Activated B cell treated with CpG ODN at 0.5 μM for 24 hours (primary cell): ENCODE measurements at regions of chr17 and their contacts with region 1.

Region 1: DNA sequence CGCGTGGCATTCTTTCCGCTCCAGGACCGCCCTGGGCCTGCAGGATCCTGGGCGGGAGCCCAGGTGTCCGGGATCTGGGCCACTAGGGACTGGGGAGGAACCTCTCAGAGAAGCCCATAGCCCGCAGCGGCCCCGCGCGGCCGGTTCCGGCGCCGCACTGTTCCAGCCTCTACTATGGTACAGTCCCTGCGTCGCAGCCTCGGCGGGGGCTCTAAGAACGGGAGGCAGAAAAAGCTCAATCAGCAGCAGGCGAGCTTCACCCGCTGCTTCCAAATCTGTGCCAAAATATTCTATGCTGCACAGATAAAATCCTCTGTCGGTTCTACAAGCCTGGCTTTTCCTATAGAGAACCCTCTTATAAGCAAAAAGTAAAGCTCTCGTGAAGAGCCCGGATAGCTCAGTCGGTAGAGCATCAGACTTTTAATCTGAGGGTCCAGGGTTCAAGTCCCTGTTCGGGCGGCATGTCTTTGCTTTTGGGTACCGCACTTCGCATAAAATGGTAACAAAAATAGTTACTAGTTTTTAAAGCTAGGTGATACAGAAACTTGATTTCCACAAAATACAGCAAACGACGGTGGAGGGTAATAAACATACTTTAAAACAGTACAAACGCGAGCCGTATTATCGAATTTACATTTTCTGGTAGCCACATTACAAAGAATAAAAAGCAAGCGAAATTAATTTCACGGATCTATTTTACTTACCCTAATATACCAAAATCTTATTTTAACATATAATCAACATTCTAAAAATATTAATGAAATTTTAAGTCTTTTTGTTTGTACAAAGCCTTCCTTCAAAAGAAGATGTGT is 661 bp upstream of the ALOXE3 start:
- DNase-seq: peak; percentile 81
- ATAC-seq: peak; percentile 68
- H3K4me3 Mint-ChIP-seq: peak overlapping the region; percentile 93
- H3K27ac Mint-ChIP-seq: peak overlapping the region; percentile 96
- H3K4me1 Mint-ChIP-seq: peaks cover 58% of the 10 kb centered on the region
- H3K27me3 Mint-ChIP-seq: peaks cover 56% of the 10 kb centered on the region
- CTCF ChIP-seq: peak; percentile 26

Region 2: DNA sequence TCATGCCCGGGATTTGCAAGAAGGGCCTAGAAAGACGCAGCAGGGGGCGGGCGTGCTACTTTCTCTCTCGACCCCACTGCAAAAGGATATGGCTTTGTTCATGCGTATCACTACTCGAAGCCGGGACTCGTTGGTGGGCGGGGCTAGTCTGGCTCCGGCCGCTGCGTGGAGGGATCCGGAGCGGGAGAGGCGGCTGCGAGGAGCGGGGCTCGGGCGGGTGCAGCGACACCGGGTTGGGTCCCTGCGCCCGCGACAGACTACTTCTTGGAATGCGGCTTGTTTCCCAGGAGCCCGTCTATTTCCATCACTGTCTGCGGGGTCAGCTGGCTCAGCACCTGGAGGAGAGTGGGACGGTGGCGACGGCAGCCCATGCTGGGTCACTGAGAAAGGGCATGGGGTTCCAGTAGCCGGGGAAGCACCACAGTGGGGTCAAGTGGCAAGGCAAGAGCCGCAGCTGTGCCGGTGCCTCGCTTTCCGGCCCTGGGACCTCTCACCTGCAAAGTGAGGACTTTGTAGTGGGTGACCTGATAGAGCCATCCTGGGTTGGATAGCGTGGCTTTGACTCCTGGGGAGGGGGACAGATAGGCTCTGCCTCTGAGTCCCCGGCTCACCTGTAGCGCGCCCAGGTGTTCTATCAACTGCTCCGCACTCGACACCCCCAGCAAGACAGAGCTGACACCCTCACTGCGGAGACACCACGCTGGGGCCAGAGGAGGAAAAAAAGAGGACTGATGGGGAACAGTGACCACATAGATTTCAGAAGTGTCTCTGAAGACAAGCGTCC is 195.9 kb before region 1 on chr17:
- CTCF ChIA-PET with region 1: no interaction called
- POLR2A ChIA-PET with region 1: no interaction called
- intact Hi-C with region 1: no loop called
- DNase-seq: peak; percentile 71
- ATAC-seq: peak; percentile 98
- H3K4me3 Mint-ChIP-seq: peak overlapping the region; percentile 82
- H3K27ac Mint-ChIP-seq: peak overlapping the region; percentile 80
- H3K4me1 Mint-ChIP-seq: peaks cover 19% of the 10 kb centered on the region
- H3K27me3 Mint-ChIP-seq: no peaks in the 10 kb centered on the region
- CTCF ChIP-seq: no peak

Region 3: GRCh38 chr17:8073627-8074484 is 45.1 kb before region 1 on chr17:
- CTCF ChIA-PET with region 1: interaction called, 33 read pairs
- POLR2A ChIA-PET with region 1: interaction called, 16 read pairs
- intact Hi-C with region 1: loop called (anchors 1 kb)
- DNase-seq: peak; percentile 83
- ATAC-seq: peak; percentile 99
- H3K4me3 Mint-ChIP-seq: peak overlapping the region; percentile 78
- H3K27ac Mint-ChIP-seq: peak overlapping the region; percentile 78
- H3K4me1 Mint-ChIP-seq: peaks cover 31% of the 10 kb centered on the region
- H3K27me3 Mint-ChIP-seq: peaks cover 45% of the 10 kb centered on the region
- CTCF ChIP-seq: peak; percentile 56

Region 4: DNA sequence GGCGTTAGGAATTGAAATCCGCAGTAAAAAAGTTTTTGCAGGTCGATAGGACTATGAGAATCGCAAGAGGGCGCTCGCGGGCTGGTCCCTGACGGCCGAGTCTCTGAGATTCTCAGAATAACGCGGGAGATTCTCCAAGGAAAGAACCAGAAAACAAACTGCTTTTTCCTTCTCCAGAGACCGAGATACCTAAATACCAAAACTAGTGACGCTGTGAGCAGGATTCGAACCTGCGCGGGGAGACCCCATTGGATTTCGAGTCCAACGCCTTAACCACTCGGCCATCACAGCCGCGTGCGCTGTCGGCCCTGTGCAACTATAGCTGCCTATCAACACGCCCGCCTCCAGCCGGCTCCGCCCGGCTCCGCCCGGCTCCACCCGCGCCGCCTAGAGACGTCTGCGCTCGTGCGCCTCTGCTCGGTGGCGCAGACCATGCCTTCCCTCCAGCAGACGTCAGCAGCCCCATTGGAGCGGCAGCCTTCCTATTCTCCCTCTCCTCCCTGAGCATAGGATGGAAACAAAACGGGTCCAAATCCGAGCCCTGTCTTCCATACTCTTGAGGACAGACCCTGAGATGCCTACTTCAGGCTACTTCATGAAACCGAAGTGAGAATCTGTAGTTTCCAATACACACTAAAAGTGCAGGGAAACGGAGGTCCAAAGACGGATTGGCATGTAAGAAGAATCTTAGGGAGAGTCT is 19.8 kb after region 1 on chr17:
- CTCF ChIA-PET with region 1: interaction called, 13 read pairs
- POLR2A ChIA-PET with region 1: interaction called, 46 read pairs
- intact Hi-C with region 1: loop called (anchors 1 kb)
- DNase-seq: peak; percentile 94
- ATAC-seq: peak; percentile 94
- H3K4me3 Mint-ChIP-seq: no peak overlapping the region
- H3K27ac Mint-ChIP-seq: no peak overlapping the region
- H3K4me1 Mint-ChIP-seq: no peaks in the 10 kb centered on the region
- H3K27me3 Mint-ChIP-seq: no peaks in the 10 kb centered on the region
- CTCF ChIP-seq: peak; percentile 93

Region 5: DNA sequence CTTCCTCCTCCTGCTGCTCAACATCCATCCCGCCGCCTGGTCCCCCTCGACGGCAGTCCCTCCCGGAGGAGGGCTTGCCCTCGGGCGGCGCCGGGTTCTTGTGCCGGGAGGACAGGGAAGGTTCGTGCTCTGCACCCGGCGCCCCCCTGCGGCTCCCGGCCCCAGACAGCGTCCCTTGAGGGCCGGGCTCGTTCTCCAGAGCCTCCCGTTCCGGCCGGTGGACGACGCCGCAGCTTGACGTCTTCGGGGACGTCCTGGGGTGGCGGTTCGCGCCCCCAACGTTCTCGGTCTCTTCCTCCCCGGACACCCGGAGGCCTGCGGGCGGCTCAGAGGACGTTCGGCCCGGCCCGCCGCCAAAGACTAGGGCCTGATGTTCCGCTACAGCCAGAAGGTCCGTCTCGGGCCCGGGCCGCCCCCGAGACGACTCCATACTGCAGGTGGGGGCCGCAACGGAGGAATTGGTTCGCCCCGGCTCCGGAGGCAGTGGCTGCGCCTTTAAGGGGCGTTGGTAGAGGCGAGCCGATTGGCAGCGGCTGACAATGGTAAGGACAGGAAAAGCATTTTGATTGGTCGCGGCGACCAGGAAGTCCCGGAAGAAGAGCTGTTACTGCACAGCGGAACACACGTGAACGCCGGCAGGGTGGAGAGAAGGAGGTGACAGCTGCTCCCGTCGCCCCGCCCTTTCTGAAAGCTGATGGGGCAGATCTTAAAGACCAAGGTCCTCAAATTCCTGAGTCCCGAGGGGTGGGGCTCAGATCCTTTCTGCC is 70.9 kb after region 1 on chr17 and contains the start of gene BORCS6:
- CTCF ChIA-PET with region 1: interaction called, 10 read pairs
- POLR2A ChIA-PET with region 1: interaction called, 27 read pairs
- intact Hi-C with region 1: loop called (anchors 1 kb)
- DNase-seq: peak; percentile 84
- ATAC-seq: peak; percentile 67
- H3K4me3 Mint-ChIP-seq: no peak within 1 kb of the TSS
- H3K27ac Mint-ChIP-seq: peak within 1 kb of the TSS; percentile 95
- H3K4me1 Mint-ChIP-seq: peaks cover 11% of the 10 kb centered on the region
- H3K27me3 Mint-ChIP-seq: no peaks in the 10 kb centered on the region
- CTCF ChIP-seq: no peak
- total RNA-seq, gene BORCS6: 12.3 and 12.8 TPM in 2 replicates

Region 6: GRCh38 chr17:8294814-8295316 is 175.9 kb after region 1 on chr17:
- CTCF ChIA-PET with region 1: interaction called, 8 read pairs
- POLR2A ChIA-PET with region 1: interaction called, 17 read pairs
- intact Hi-C with region 1: loop called (anchors 2 kb)
- DNase-seq: no peak
- ATAC-seq: no peak
- H3K4me3 Mint-ChIP-seq: peak overlapping the region; percentile 92
- H3K27ac Mint-ChIP-seq: peak overlapping the region; percentile 86
- H3K4me1 Mint-ChIP-seq: peaks cover 30% of the 10 kb centered on the region
- H3K27me3 Mint-ChIP-seq: no peaks in the 10 kb centered on the region
- CTCF ChIP-seq: no peak